ENCODE measurements at regions of chr6 and their contacts with region 1.

Region 1: GRCh38 chr6:111899531-111899930 is 26.3 kb upstream of the FYN start:
- DNase-seq: no peak

Region 2: GRCh38 chr6:111912904-111913303 is 13.4 kb after region 1 on chr6:
- intact Hi-C with region 1: no loop called
- DNase-seq: no peak

Region 3: DNA sequence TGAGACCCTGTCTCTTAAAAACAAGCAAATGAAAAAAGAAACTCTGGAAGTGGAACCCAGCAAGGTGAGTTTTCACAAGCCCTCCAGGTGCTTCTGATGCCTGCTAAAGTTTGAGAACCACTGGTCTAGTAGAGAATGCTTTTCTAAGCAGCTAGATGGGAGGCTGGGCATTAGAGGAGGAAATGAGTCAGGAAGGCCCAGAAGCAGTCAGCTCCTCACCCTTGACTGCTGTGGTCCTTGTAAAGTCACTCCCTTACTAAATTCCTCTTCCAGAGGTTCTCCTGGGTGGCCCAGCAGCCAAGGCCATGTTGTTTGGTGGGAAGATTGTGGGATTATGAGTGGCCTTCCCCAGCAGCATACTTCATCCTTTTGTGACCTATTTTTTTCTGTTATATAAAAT is 25.8 kb after region 1 on chr6:
- intact Hi-C with region 1: no loop called
- DNase-seq: no peak

Region 4: DNA sequence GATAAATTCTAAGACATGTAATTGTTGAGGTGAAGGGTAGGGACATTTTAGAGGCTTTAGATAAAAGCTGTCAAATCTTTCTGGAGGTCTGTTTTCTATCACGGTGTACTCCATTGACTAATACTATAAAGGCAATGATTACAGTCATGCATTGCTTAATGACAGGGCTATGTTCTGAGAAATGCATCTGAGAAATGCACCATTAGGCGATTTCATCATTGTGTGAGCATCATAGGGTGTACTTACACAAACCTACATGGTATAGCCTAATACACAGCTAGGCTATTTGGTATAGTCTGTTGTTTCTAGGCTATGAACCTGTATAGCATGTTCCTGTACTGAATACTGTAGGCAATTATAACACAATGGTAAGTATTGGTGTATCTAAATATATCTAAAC is 45.0 kb after region 1 on chr6:
- intact Hi-C with region 1: loop called in 1 of 2 experiments (anchors 2 kb)
- DNase-seq: no peak